Activated CD4-positive, alpha-beta T cell treated with anti-CD3 and anti-CD28 coated beads for 36 hours (primary cell): ENCODE measurements at regions of chr6 and their contacts with region 1.

Region 1: DNA sequence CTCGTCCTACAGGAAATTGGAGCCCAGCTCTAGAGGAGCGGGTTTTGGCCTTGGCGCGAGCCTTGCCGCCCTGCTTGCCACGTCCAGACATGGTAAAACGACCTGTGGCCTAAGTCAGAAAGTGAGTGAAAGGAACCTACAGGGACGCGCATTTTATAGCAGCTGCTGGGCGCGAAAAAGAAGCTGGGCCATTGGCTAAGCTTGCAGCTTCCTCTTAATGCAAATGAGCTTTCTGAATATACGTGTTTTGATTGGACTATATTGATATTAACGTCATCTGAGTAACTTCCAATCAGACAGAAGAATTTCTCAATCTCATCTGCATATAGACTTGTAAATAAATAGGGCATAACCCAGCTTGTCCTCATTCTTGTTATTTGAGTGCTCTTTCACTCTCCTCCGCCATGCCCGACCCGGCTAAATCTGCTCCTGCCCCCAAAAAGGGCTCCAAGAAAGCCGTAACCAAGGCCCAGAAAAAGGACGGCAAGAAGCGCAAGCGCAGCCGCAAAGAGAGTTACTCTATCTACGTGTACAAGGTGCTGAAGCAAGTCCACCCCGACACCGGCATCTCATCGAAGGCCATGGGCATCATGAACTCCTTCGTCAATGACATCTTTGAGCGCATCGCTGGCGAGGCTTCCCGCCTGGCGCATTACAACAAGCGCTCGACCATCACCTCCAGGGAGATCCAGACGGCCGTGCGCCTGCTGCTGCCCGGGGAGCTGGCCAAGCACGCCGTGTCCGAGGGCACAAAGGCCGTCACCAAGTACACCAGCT is 18.9 kb downstream of the OR2B2 start:
- DNase-seq: peak; percentile 94
- ATAC-seq: peak; percentile 64
- H3K4me3 Mint-ChIP-seq: no peak overlapping the region
- H3K27ac Mint-ChIP-seq: no peak overlapping the region
- H3K4me1 Mint-ChIP-seq: peaks cover 31% of the 10 kb centered on the region
- H3K27me3 Mint-ChIP-seq: no peaks in the 10 kb centered on the region

Region 2: DNA sequence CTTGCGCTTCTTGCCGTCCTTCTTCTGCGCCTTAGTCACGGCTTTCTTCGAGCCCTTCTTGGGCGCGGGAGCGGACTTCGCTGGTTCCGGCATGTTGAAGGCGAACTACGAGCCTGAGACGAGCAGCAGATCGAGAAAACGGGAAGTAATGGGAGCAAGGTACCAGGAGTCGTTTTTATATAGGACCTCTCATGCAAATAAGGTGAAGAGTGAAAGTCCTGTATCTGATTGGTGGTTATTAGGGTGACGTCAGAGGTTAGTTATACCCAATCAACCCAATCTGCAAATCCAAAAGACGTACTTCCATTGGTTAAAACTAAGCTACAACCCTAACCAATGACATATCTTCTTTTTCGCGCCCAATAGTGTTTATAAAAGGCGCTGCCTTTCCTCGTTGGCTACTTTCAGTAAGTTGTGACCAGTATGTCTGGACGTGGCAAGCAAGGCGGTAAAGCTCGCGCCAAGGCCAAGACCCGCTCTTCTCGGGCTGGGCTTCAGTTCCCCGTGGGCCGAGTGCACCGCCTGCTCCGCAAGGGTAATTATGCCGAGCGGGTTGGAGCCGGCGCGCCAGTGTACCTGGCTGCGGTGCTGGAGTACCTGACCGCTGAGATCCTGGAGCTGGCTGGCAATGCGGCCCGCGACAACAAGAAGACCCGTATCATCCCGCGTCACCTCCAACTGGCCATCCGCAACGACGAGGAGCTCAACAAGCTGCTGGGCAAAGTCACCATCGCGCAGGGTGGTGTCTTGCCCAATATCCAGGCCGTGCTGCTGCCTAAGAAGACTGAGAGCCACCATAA is 746.3 kb before region 1 on chr6:
- CTCF ChIA-PET with region 1: interaction called, 3 read pairs
- POLR2A ChIA-PET with region 1: interaction called, 73 read pairs
- intact Hi-C with region 1: loop called (anchors 1 kb)
- DNase-seq: peak; percentile 89
- ATAC-seq: peak; percentile 69
- H3K4me3 Mint-ChIP-seq: no peak overlapping the region
- H3K27ac Mint-ChIP-seq: no peak overlapping the region
- H3K4me1 Mint-ChIP-seq: peaks cover 11% of the 10 kb centered on the region
- H3K27me3 Mint-ChIP-seq: no peaks in the 10 kb centered on the region

Region 3: GRCh38 chr6:27472617-27473400 is 420.4 kb before region 1 on chr6 and contains the start of gene ZNF184:
- CTCF ChIA-PET with region 1: no interaction called
- POLR2A ChIA-PET with region 1: interaction called, 3 read pairs
- intact Hi-C with region 1: loop called (anchors 2 to 10 kb)
- DNase-seq: peak; percentile 91
- ATAC-seq: peak; percentile 83
- H3K4me3 Mint-ChIP-seq: peak within 1 kb of the TSS; percentile 84
- H3K27ac Mint-ChIP-seq: peak within 1 kb of the TSS; percentile 97
- H3K4me1 Mint-ChIP-seq: peaks cover 44% of the 10 kb centered on the region
- H3K27me3 Mint-ChIP-seq: no peaks in the 10 kb centered on the region
- total RNA-seq, gene ZNF184: 11.8 to 14.5 TPM

Region 4: DNA sequence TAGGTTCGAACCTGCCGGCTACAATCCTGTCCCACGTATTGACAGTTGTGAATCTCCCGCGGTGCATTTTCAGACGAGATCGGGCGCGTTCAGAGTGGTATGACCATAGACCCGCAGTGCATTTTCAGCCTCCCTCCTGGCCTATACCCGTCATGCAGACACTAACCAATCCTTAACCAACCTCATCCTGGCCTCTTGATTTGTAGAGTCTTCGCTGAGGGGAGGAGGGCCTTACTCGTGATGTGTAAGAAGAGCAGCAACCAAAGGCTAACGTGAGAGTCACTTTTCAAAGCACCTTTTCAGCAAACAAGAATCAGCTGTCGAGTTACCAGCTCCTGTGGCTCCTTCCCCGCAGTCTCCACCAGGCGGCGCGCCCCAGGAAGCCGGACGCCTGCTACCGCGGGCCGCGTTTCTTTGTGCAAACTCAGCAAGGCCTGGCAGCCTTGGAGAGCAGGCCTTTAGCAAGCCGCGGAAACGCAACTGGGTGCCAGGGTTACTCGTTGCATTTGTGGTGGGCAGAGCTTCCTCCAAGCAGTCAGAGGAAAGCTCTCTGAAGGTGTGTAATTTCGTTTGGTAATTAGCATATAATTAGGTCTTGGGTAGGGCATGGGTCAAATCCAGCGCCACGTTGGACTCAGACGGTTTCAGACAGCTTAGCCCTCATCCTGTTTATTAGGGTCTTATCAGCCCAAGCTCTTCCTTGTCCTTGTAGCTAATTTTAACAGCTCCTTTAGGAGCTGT is 120.8 kb before region 1 on chr6:
- CTCF ChIA-PET with region 1: interaction called, 14 read pairs
- POLR2A ChIA-PET with region 1: interaction called, 7 read pairs
- intact Hi-C with region 1: loop called (anchors 1 kb)
- DNase-seq: peak; percentile 94
- ATAC-seq: peak; percentile 95
- H3K4me3 Mint-ChIP-seq: peak overlapping the region; percentile 14
- H3K27ac Mint-ChIP-seq: peak overlapping the region; percentile 56
- H3K4me1 Mint-ChIP-seq: peaks cover 9% of the 10 kb centered on the region
- H3K27me3 Mint-ChIP-seq: peaks cover 8% of the 10 kb centered on the region

Region 5: DNA sequence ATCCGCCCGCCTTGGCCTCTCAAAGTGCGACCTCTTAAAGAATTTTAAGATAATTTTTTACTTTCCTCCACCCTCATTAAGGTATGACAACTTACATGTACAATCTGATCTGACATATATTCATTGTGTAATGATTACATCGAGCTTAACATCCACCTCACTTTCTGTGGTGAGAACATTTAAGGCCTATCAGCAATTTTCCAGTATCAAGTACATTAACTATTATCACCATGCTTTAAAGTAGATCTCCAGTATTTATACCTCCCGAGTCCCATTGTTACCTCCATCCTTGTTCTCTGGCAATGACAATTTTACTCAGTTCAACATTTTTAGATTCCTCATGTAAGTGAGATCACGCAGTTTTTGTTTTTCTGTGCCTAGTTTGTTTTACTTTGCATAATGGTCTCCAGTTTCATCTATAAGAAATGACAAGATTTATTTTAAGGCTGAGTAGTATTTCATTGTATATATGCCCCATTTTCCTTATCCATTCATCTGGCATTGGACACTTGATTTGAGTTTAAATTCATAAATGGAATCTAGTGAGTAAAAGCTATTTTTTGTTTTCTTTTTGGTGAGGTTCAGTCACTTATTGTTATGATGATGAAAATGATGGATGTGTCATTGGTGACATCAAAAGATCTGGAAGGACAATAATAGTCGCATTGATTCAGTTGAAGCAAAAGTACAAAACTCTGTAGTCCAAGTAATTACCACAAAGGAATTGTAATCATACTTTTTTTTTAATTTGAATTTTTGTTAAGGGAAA is 68.0 kb before region 1 on chr6:
- CTCF ChIA-PET with region 1: interaction called, 60 read pairs
- POLR2A ChIA-PET with region 1: interaction called, 66 read pairs
- intact Hi-C with region 1: loop called in 1 of 2 experiments (anchors 1 kb)
- DNase-seq: no peak
- ATAC-seq: peak; percentile 3
- H3K4me3 Mint-ChIP-seq: peak overlapping the region; percentile 79
- H3K27ac Mint-ChIP-seq: peak overlapping the region; percentile 92
- H3K4me1 Mint-ChIP-seq: peaks cover 20% of the 10 kb centered on the region
- H3K27me3 Mint-ChIP-seq: no peaks in the 10 kb centered on the region

Region 6: GRCh38 chr6:27871924-27872638 is 21.2 kb before region 1 on chr6:
- CTCF ChIA-PET with region 1: interaction called, 56 read pairs
- POLR2A ChIA-PET with region 1: interaction called, 775 read pairs
- intact Hi-C with region 1: loop called (anchors 1 kb)
- DNase-seq: peak; percentile 84
- ATAC-seq: peak; percentile 59
- H3K4me3 Mint-ChIP-seq: peak overlapping the region; percentile 81
- H3K27ac Mint-ChIP-seq: peak overlapping the region; percentile 96
- H3K4me1 Mint-ChIP-seq: peaks cover 40% of the 10 kb centered on the region
- H3K27me3 Mint-ChIP-seq: no peaks in the 10 kb centered on the region